Caco-2 (cell line): ENCODE measurements at regions of chr12 and their contacts with region 1.

Region 1: GRCh38 chr12:72264548-72265175 is 7.5 kb upstream of the TRHDE start:
- DNase-seq: peak in 1 of 2 experiments; percentile 20
- H3K4me3 ChIP-seq: no peak overlapping the region
- H3K4me3 Mint-ChIP-seq: no peak overlapping the region
- H3K27ac Mint-ChIP-seq: no peak overlapping the region
- H3K4me1 ChIP-seq: no peaks in the 10 kb centered on the region
- H3K4me1 Mint-ChIP-seq: no peaks in the 10 kb centered on the region
- H3K27me3 ChIP-seq: no peaks in the 10 kb centered on the region
- H3K27me3 Mint-ChIP-seq: no peaks in the 10 kb centered on the region
- CTCF ChIP-seq: peak; percentile 11 to 52

Region 2: GRCh38 chr12:72133497-72134055 is 131.1 kb before region 1 on chr12:
- CTCF ChIA-PET with region 1: no interaction called
- POLR2A ChIA-PET with region 1: no interaction called
- intact Hi-C with region 1: loop called (anchors 1 kb)
- DNase-seq: no peak
- H3K4me3 ChIP-seq: no peak overlapping the region
- H3K4me3 Mint-ChIP-seq: no peak overlapping the region
- H3K27ac Mint-ChIP-seq: no peak overlapping the region
- H3K4me1 ChIP-seq: no peaks in the 10 kb centered on the region
- H3K4me1 Mint-ChIP-seq: no peaks in the 10 kb centered on the region
- H3K27me3 ChIP-seq: no peaks in the 10 kb centered on the region
- H3K27me3 Mint-ChIP-seq: peaks cover 17% of the 10 kb centered on the region
- CTCF ChIP-seq: no peak

Region 3: GRCh38 chr12:72282721-72283120 is 18.1 kb after region 1 on chr12:
- CTCF ChIA-PET with region 1: interaction called, 3 read pairs
- POLR2A ChIA-PET with region 1: no interaction called
- intact Hi-C with region 1: loop called (anchors 1 kb)
- DNase-seq: no peak
- H3K4me3 ChIP-seq: no peak overlapping the region
- H3K4me3 Mint-ChIP-seq: no peak overlapping the region
- H3K27ac Mint-ChIP-seq: no peak overlapping the region
- H3K4me1 ChIP-seq: no peaks in the 10 kb centered on the region
- H3K4me1 Mint-ChIP-seq: no peaks in the 10 kb centered on the region
- H3K27me3 ChIP-seq: no peaks in the 10 kb centered on the region
- H3K27me3 Mint-ChIP-seq: peaks cover 5% of the 10 kb centered on the region
- CTCF ChIP-seq: peak in 1 of 2 experiments; percentile 54

Region 4: DNA sequence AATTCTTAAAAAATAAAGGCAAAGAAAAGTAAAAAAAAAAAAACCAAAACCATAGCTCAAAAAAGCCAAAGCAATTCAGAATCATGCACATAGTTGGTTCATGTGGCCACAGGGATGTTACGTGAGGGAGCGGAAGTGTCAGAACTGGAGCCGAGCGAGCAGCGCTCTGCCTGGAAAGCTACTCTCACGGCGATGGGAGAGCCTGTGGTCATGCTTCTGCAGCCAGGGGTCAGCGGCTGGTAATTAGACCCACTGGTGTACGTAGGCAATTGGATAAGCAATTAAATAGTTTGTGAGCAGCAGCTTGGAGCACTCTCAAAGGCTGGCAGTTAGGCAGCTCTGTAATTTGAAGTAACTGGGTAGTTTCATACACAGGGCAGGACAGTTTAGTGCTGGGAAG is 65.6 kb after region 1 on chr12:
- CTCF ChIA-PET with region 1: no interaction called
- POLR2A ChIA-PET with region 1: no interaction called
- intact Hi-C with region 1: no loop called
- DNase-seq: no peak
- H3K4me3 ChIP-seq: no peak overlapping the region
- H3K4me3 Mint-ChIP-seq: no peak overlapping the region
- H3K27ac Mint-ChIP-seq: no peak overlapping the region
- H3K4me1 ChIP-seq: no peaks in the 10 kb centered on the region
- H3K4me1 Mint-ChIP-seq: no peaks in the 10 kb centered on the region
- H3K27me3 ChIP-seq: no peaks in the 10 kb centered on the region
- H3K27me3 Mint-ChIP-seq: peaks cover 9% of the 10 kb centered on the region
- CTCF ChIP-seq: no peak